PC-9 (cell line): ENCODE measurements at regions of chr10 and their contacts with region 1.

Region 1: GRCh38 chr10:571688-572451 is 117.6 kb downstream of the DIP2C start:
- DNase-seq: no peak
- H3K4me3 ChIP-seq: no peak overlapping the region
- H3K27ac ChIP-seq: no peak overlapping the region
- H3K4me1 ChIP-seq: no peaks in the 10 kb centered on the region
- H3K27me3 ChIP-seq: peaks cover 64% of the 10 kb centered on the region
- CTCF ChIP-seq: no peak

Region 2: GRCh38 chr10:697097-697875 is 125.4 kb after region 1 on chr10:
- CTCF ChIA-PET with region 1: no interaction called
- POLR2A ChIA-PET with region 1: no interaction called
- intact Hi-C with region 1: no loop called
- DNase-seq: no peak
- H3K4me3 ChIP-seq: no peak overlapping the region
- H3K27ac ChIP-seq: no peak overlapping the region
- H3K4me1 ChIP-seq: no peaks in the 10 kb centered on the region
- H3K27me3 ChIP-seq: peaks cover 14% of the 10 kb centered on the region
- CTCF ChIP-seq: no peak

Region 3: GRCh38 chr10:740936-741431 is 169.1 kb after region 1 on chr10:
- CTCF ChIA-PET with region 1: interaction called, 14 read pairs
- POLR2A ChIA-PET with region 1: no interaction called
- intact Hi-C with region 1: no loop called
- DNase-seq: no peak
- H3K4me3 ChIP-seq: no peak overlapping the region
- H3K27ac ChIP-seq: no peak overlapping the region
- H3K4me1 ChIP-seq: no peaks in the 10 kb centered on the region
- H3K27me3 ChIP-seq: peaks cover 38% of the 10 kb centered on the region
- CTCF ChIP-seq: no peak